Dorsolateral prefrontal cortex (tissue), 120 donors: ENCODE measurements at regions of chr2 and their contacts with region 1.

Region 1: DNA sequence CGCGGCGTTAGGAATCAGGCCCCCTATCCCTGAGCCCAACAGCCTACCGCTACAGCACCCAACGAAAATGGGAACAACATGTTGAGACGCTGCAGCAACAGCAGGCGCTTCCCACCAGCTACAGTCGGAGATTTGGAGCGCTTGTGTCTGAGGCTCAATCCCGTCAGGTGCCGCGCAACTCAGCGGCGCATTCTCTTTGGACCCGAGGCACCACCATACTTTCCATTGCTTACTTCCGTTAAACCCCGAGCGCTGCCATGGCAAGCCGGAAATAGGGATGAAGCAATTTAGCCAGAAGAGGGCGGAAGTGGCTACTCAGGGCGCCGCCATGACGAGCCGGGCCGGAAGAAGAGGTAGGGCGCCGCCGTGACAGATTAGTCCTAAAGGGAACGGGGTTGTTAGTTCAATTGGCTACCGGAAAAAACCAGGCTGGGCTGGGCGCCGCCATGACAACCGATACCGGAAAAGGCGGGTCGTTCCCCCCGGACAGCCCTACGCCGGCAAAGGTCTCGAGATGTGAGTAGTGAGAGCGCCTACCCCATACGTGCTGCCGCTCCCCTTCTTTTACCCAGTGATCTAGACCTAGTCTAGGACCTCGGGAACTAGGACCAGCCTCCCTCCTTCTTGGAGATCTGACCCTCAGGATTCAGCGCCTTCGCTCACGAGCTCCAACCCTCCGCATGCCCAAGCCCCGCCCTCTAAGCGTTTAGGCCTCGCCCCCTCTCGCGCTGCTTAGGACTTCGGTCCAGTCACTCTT is at the start of gene CHCHD5:
- DNase-seq: peak; percentile 89 to 99 (median 96)
- H3K4me3 ChIP-seq: peak within 1 kb of the TSS; percentile 52 to 95 (median 81)
- H3K27ac ChIP-seq: peak within 1 kb of the TSS; percentile 72 to 99 (median 96)
- H3K27me3 ChIP-seq: no peaks in the 10 kb centered on the region
- CTCF ChIP-seq: peak in 55 of 56 donors; percentile 38 to 83 (median 64)
- total RNA-seq, gene CHCHD5: 8.2 to 25.8 (median 17.1) TPM

Region 2: DNA sequence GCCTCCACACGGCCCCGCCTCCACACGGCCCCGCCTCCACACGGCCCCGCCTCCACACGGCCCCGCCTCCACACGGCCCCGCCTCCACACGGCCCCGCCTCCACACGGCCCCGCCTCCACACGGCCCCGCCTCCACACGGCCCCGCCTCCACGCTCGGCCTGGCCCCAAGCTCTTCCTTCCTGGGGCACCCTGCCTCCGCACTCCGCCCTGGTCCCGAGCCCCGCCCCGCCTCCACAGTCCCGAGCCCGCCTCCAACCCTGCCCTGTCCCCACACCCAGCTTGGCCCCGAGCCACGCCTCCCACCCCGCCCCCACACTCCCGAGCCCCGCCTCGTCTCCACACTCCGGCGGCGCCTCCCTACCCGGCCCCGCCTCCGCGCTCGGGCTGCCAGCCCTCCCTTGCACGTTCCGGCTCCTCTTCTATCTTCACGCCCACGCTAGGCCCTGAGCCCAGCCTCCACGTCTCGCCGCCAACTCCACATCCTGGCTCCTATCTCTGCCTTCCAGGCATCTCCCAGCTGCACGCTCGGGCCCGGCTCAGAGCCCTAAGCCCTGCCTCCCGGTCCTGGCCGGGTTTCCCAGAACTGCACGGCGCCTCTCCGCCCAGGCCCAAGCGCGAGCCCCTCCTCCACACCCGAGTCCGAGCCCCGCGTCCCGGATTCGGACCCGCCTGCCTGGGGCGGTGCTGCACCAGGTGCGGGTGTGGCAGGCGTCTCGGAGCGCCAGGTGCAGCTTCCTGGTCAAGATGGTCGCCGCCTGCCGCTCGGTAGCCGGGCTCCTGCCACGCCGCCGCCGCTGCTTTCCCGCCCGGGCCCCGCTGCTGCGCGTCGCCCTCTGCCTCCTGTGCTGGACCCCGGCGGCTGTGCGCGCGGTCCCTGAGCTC is 529.2 kb before region 1 on chr2 and contains the start of gene TMEM87B:
- intact Hi-C with region 1: loop called in 1 of 2 experiments (anchors 5 kb)
- DNase-seq: peak; percentile 90 to 97 (median 95)
- H3K4me3 ChIP-seq: peak within 1 kb of the TSS; percentile 62 to 98 (median 89)
- H3K27ac ChIP-seq: peak within 1 kb of the TSS; percentile 56 to 97 (median 93)
- H3K27me3 ChIP-seq: no peaks in the 10 kb centered on the region
- CTCF ChIP-seq: peak in 7 of 56 donors; percentile 6 to 24 (median 11)
- total RNA-seq, gene TMEM87B: 7.2 to 27.9 (median 14.7) TPM

Region 3: DNA sequence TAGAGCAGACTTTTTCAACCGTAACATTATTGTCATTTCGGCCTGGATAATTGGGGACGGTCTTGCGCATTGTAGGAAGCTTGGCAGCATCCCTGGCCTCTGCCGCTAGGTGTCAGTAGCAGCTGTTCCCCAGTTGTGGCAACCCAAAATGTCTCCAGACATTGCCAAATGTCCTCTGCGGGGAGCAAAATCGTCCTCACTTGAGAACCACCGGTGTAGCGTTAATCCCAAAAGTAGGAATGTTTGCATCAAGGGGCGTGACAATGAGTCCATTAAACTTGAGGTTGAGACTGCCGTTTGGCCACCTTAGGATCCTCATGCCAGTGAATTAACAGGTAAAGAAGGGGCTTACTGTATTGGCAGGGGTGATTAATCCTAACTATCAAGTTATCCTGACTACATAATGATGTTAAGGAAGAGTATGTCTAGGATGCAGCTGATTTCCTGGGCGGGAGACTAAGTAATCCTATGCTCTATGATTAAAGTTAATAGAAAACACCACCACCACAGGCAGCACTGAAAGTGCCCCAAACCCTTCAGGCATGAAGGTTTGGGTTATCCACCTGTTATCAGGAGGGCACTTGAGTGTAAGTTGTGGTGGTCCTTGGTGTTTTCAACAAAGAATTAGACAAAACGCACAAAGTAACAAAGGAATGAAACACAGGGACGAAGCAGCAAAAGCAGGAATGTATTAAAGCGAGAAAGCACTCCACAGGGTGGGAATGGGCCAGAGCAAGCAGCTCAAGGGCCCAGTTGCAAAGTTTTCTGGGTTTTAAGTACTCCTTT is 324.6 kb before region 1 on chr2:
- intact Hi-C with region 1: loop called in 1 of 2 experiments (anchors 2 kb)
- DNase-seq: peak; percentile 65 to 81 (median 72)
- H3K4me3 ChIP-seq: peak overlapping the region in 49 of 59 donors; percentile 3 to 57 (median 29)
- H3K27ac ChIP-seq: peak overlapping the region in 12 of 59 donors; percentile 0 to 62 (median 30)
- H3K27me3 ChIP-seq: no peaks in the 10 kb centered on the region
- CTCF ChIP-seq: peak; percentile 71 to 96 (median 88)

Region 4: GRCh38 chr2:112433932-112434730 is 150.2 kb before region 1 on chr2:
- intact Hi-C with region 1: loop called in 1 of 2 experiments (anchors 5 kb)
- DNase-seq: no peak
- H3K4me3 ChIP-seq: peak overlapping the region in 34 of 59 donors; percentile 25 to 79 (median 64)
- H3K27ac ChIP-seq: peak overlapping the region in 7 of 59 donors; percentile 20 to 84 (median 48)
- H3K27me3 ChIP-seq: no peaks in the 10 kb centered on the region
- CTCF ChIP-seq: no peak

Region 5: GRCh38 chr2:112542123-112542983 is 42.0 kb before region 1 on chr2 and contains the start of gene POLR1B:
- intact Hi-C with region 1: loop called (anchors 2 to 5 kb)
- DNase-seq: peak; percentile 79 to 91 (median 88)
- H3K4me3 ChIP-seq: peak within 1 kb of the TSS; percentile 68 to 100 (median 95)
- H3K27ac ChIP-seq: peak within 1 kb of the TSS; percentile 84 to 99 (median 96)
- H3K27me3 ChIP-seq: no peaks in the 10 kb centered on the region
- CTCF ChIP-seq: peak in 17 of 56 donors; percentile 9 to 46 (median 30)
- total RNA-seq, gene POLR1B: 10.4 to 27.6 (median 17.8) TPM

Region 6: DNA sequence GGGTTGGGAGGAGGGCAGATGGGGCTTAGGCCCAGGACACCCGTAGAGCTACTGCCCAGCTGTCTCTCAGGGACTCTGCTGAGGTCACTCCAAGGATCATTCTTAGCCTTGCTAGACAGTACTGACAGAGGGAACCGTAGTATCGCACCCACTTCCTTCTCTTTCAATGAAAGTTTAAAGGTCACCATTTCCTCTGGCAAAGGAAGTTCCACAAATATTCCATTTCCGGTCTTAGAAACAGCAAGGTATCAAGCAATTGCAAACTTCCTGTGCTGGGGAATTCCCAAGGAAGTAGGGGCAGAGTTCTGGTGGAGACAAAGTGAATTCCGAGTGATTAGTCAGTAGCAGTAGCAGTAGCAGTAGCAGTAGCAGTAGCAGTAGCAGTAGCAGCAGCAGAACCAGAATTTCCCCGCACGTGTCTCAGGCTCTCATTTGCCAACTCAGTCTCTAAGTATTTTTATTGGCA is 227.6 kb after region 1 on chr2:
- intact Hi-C with region 1: no loop called
- DNase-seq: no peak
- H3K4me3 ChIP-seq: no peak overlapping the region
- H3K27ac ChIP-seq: peak overlapping the region in 2 of 59 donors; percentile 19 to 31
- H3K27me3 ChIP-seq: no peaks in the 10 kb centered on the region
- CTCF ChIP-seq: no peak